Aorta (tissue), 5 donors: ENCODE measurements at regions of chr2 and their contacts with region 1.

Region 1: DNA sequence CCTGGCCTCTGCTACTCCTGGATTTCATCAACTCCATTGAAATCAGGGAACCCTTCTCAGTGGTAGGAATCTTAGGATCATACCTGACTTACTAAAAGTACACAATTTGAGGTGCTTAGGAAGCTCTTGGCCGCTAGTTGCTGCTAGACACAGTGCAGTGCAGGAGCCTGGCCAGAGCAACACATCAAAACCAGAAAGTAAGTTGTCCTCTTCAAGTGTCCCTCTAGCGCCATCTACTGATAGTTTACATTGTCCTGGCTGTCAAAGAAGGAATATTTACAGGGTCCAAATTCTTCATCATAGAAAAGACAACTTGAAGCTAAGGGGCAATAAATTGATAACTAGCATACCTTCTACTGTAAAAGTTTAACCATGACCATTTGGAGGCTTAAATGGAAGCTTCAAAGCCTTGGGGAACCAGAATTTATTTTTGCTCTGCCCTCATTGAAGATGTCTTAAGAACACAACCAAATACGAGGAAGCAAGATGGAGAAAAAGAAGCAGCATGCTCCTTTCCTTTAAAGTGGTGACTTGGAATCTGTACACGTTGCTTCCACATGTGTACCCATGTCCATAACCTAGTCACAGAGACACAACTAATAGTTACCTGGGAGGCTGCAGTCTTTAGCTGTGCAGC is 889.1 kb upstream of the GCFC2 start:
- DNase-seq: no peak
- ATAC-seq: peak; percentile 62
- H3K4me3 ChIP-seq: no peak overlapping the region
- H3K27ac ChIP-seq: no peak overlapping the region
- H3K4me1 ChIP-seq: no peaks in the 10 kb centered on the region
- H3K27me3 ChIP-seq: no peaks in the 10 kb centered on the region

Region 2: GRCh38 chr2:76197842-76198448 is 401.9 kb before region 1 on chr2:
- intact Hi-C with region 1: loop called in 1 of 2 experiments (anchors 10 kb)
- DNase-seq: peak in 1 of 2 donors; percentile 38
- ATAC-seq: no peak
- H3K4me3 ChIP-seq: no peak overlapping the region
- H3K27ac ChIP-seq: no peak overlapping the region
- H3K4me1 ChIP-seq: no peaks in the 10 kb centered on the region
- H3K27me3 ChIP-seq: no peaks in the 10 kb centered on the region

Region 3: DNA sequence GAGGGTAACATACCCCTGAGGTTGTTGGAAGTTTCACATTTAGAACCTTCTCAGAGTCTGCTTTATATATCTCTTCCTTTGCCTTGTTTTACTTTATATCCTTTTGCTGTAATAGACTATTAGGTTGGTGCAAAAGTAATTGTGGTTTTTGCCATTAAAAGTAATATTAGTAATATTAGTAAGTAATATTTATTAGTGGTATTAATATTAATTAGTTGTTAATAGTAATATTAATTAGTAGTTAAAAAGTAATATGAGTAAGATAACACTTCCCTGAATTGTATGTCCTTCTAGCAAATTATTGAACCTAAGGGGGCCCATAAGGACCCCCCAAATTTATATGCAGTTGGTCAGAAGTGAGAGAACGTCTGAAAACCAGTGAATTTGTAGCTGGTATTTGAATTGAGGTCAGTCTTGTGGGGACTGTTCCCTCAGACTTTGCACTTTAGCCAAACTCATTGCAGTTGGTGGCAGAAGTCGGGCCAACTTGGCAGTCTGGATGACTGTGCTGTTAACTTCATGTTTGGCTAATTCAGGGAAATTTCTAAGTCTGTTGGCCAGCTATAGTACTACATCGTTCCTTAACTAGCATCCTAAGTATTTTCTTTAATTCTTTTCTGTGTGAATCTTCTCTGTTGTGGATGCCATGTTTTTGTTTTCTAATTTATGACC is 82.5 kb before region 1 on chr2:
- intact Hi-C with region 1: no loop called
- DNase-seq: no peak
- ATAC-seq: no peak
- H3K4me3 ChIP-seq: no peak overlapping the region
- H3K27ac ChIP-seq: no peak overlapping the region
- H3K4me1 ChIP-seq: no peaks in the 10 kb centered on the region
- H3K27me3 ChIP-seq: no peaks in the 10 kb centered on the region

Region 4: DNA sequence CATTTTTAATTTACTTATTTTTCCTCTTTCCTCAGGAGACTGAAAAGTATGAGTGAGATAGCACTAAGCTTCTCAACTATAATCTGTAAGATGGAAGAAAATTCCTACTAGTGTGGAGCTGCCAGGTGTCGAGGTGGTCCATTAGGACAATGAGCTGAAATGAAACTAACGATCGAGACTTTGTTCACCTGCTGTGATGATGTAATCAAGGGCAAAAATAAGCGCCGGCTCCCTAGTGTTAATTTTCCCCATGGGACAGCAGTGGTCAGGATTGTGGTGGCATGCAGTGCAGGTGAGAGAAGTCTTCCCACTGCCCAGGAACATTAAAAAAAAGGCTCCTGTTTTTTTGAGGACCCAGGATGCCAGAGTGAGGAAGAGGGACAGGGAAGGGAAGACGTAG is 30.0 kb before region 1 on chr2:
- intact Hi-C with region 1: no loop called
- DNase-seq: no peak
- ATAC-seq: no peak
- H3K4me3 ChIP-seq: no peak overlapping the region
- H3K27ac ChIP-seq: no peak overlapping the region
- H3K4me1 ChIP-seq: no peaks in the 10 kb centered on the region
- H3K27me3 ChIP-seq: no peaks in the 10 kb centered on the region